ENCODE measurements at regions of chr14 and their contacts with region 1.

Region 1: GRCh38 chr14:74018586-74019407 is at the starts of genes BBOF1 and ENTPD5:
- DNase-seq: peak; percentile 83 to 89 (median 88)
- ATAC-seq: peak; percentile 98
- H3K4me3 ChIP-seq: peak within 1 kb of the TSS; percentile 79
- H3K4me3 Mint-ChIP-seq: peak within 1 kb of the TSS; percentile 80 to 97 (median 94)
- H3K27ac ChIP-seq: peak within 1 kb of the TSS; percentile 93
- H3K27ac Mint-ChIP-seq: peak within 1 kb of the TSS; percentile 89 to 98 (median 96)
- H3K4me1 ChIP-seq: peaks cover 6 to 10% of the 10 kb centered on the region in 2 donors
- H3K4me1 Mint-ChIP-seq: peaks cover 7 to 24% (median 14%) of the 10 kb centered on the region in 7 donors
- H3K27me3 ChIP-seq: no peaks in the 10 kb centered on the region
- H3K27me3 Mint-ChIP-seq: peaks cover 0 to 2% (median 0%) of the 10 kb centered on the region in 5 donors
- total RNA-seq, gene BBOF1: 0.80 to 4.0 (median 2.6) TPM
- total RNA-seq, gene ENTPD5: 8.6 to 17.1 (median 11.2) TPM

Region 2: DNA sequence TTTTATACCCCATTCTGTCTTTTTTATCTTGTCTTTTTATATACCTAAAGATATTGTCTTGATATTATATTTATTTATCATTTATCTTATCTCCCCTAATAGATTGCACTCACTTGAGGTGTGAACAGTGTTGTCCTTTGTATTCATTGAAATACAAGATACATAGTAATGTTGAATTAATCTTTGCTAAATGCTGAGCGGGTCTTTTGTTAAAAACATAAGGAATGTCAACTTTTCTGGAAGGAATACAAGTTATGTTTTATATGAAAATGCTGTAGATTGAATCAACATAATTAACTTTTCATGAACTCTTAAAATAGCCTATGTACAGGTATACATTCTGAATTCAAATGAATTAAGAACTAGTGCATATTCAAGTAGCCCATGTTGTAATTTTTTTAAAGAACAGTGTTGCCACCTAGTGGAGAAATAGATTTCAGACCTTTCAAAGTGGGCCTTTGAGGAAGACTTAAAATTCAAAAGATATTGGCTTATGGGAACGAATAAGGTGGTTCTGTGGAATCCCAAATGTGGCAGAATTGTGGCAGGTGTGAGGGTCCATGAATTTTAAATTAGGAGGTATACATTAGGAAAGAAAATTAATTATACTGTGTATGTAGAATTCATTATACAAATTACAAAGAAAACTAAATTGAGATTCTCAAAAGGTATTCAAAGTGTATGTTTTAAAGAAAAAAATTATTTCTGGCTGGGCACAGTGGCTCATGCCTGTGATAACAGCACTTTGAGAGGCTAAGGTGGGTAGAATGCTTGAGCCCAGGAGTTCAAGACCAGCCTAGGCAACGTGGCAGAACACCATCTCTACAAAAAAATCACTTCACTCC is 19.4 kb after region 1 on chr14:
- CTCF ChIA-PET with region 1: no interaction called
- POLR2A ChIA-PET with region 1: no interaction called
- intact Hi-C with region 1: loop called in 1 of 2 experiments (anchors 1 kb)
- DNase-seq: peak in 7 of 9 donors; percentile 19 to 63 (median 49)
- ATAC-seq: peak; percentile 65
- H3K4me3 ChIP-seq: no peak overlapping the region
- H3K4me3 Mint-ChIP-seq: no peak overlapping the region
- H3K27ac ChIP-seq: no peak overlapping the region
- H3K27ac Mint-ChIP-seq: peak overlapping the region in 1 of 9 donors; percentile 29
- H3K4me1 ChIP-seq: no peaks in the 10 kb centered on the region
- H3K4me1 Mint-ChIP-seq: no peaks in the 10 kb centered on the region
- H3K27me3 ChIP-seq: no peaks in the 10 kb centered on the region
- H3K27me3 Mint-ChIP-seq: no peaks in the 10 kb centered on the region

Measured in naive thymus-derived CD4-positive, alpha-beta T cell (primary cell).